Mammary epithelial cell (primary cell): ENCODE measurements at regions of chr5 and their contacts with region 1.

Region 1: GRCh38 chr5:174735498-174736330 is 11.3 kb downstream of the MSX2 start:
- DNase-seq: no peak
- H3K4me3 ChIP-seq: peak overlapping the region; percentile 31 to 42 (median 36)
- H3K27ac ChIP-seq: no peak overlapping the region
- H3K4me1 ChIP-seq: peaks cover 8% of the 10 kb centered on the region
- H3K27me3 ChIP-seq: peaks cover 7% of the 10 kb centered on the region
- CTCF ChIP-seq: peak; percentile 70 to 82

Region 2: DNA sequence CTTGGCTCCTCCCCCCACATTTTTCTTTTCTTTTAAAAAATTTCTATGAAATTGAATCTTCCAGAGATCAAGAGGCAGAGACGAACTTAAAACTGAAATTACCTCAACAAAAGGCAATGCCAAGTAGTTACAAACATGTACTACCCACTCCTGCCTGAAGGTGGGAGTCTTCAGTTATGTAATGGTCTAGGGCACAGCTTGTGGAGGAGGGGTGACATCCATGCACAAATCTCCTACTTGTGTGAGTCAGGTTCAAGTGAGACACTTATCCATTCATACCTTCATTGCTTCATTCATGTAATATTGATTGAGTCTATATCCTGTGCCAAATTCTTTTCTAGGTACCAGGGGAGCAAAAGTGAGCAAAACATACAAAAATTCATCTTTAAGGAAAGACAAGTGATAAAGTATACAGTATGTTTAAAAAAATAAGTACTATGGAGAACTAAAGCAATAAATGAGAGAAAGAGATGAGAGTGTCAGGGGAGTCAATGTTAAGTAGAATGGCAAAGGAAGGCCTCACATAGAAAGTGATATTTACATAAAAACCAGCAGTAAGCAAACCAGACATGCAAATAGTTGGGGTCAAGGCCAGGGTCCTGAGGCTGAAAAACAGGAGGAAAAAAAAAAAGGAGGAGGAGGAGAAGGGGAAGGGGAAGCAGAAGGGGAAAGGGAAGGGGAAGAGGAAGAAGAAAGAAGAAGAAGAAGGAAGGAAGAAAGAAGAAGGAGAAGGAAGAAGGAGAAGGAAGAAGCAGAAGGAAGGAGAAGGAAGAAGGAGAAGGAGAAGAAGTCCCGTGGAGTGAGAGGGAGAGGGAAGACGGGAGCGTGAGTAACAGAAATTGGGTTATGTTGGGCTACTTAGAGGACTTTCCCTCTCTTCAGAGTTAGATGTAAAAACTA is 715.1 kb before region 1 on chr5:
- CTCF ChIA-PET with region 1: no interaction called
- dilution Hi-C with region 1: no loop called
- in situ Hi-C with region 1: no loop called
- intact Hi-C with region 1: loop called (anchors 10 kb)
- DNase-seq: peak; percentile 59
- H3K4me3 ChIP-seq: no peak overlapping the region
- H3K27ac ChIP-seq: no peak overlapping the region
- H3K4me1 ChIP-seq: no peaks in the 10 kb centered on the region
- H3K27me3 ChIP-seq: no peaks in the 10 kb centered on the region
- CTCF ChIP-seq: peak in 1 of 2 donors; percentile 57

Region 3: DNA sequence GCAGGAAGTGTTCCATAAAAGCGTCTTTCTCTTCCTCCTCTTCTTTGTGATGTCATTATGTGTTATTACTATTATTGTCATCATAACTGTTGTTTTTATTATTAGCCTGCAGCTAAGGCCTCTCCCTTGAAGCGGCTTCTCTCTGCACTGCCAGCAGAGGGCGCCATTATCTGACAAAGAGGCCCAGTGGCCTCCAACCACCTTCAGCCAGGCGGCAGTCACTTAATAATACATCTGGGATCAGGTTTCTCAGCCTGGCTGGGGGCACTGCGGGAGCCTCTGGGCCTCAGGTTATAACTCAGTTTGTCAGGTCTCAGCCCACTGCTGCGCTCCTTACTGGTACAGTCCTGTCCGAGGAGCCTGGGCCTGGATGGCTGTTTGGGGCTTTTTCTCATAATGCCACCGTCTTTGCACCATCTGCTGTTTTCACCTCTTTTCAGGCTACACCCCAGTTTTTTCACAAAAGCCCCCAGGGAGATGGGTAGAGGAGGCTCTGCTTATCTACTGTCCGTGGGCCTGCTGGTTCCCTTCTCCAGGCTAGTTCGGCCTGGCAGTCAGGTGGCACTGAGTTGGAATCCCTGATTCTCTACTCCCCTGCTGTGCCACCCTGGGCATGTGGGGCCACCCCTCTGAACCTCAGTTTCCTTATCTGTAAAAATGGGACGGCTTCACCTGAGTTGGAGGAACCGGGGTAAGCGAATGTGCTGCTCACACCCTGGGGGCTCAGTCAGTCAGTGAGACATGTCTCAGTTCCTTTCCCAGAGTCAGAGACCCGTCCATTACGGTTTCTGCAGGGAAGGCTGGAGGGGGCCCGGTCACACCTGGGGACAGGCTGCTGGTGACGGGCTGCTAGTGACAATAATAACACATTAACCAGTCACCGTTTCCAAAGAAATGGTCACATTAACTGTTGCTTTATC is 408.1 kb before region 1 on chr5:
- CTCF ChIA-PET with region 1: no interaction called
- dilution Hi-C with region 1: no loop called
- in situ Hi-C with region 1: no loop called
- intact Hi-C with region 1: loop called (anchors 1 kb)
- DNase-seq: peak; percentile 56
- H3K4me3 ChIP-seq: no peak overlapping the region
- H3K27ac ChIP-seq: no peak overlapping the region
- H3K4me1 ChIP-seq: no peaks in the 10 kb centered on the region
- H3K27me3 ChIP-seq: no peaks in the 10 kb centered on the region
- CTCF ChIP-seq: peak; percentile 85 to 90

Region 4: DNA sequence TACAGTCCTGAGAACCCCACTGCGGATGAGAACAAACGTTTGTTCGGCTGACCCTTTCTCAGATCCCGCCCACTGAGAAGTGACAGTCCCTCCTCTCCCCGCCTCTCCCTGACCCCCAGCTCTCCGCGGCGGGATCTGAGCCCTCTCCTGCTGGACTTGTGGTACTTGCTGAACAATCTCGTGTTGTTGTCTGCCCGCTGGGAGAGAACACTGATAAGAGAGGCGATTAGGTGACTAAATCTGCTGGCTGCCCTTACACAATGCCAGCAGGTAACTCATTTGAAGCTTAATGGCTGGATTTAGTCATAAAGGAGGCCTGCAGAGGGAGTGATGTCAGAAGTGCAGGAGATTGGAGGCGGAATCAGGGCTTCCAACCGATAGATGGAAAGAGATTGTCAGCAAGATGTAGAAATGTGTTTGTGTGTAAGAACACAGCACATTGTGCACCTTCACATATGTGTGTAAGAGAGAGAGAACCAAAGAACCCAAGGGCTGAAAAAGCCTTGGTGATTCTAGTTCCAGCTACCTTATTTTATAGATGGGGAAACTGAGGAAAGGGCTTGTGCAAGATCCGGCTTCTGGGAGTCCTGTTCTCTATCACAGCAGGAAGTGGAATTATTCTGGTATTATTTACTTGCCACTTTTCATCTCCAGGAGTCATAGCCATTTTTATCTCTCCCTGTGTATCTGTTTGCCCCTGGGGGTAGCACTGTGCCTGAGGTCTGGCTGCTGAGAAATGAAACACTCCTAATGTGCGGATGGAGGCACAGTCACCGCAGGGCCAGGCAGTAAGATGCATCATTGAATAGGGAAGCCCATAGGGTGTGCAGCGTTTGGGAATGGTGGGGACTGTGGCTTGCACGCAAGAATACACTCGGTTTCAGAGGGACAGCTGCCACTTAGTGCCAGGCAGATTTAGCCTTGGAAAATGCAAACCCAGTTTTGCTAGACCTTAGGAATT is 215.0 kb before region 1 on chr5:
- CTCF ChIA-PET with region 1: no interaction called
- dilution Hi-C with region 1: no loop called
- in situ Hi-C with region 1: no loop called
- intact Hi-C with region 1: loop called (anchors 5 kb)
- DNase-seq: no peak
- H3K4me3 ChIP-seq: no peak overlapping the region
- H3K27ac ChIP-seq: no peak overlapping the region
- H3K4me1 ChIP-seq: no peaks in the 10 kb centered on the region
- H3K27me3 ChIP-seq: no peaks in the 10 kb centered on the region
- CTCF ChIP-seq: no peak

Region 5: DNA sequence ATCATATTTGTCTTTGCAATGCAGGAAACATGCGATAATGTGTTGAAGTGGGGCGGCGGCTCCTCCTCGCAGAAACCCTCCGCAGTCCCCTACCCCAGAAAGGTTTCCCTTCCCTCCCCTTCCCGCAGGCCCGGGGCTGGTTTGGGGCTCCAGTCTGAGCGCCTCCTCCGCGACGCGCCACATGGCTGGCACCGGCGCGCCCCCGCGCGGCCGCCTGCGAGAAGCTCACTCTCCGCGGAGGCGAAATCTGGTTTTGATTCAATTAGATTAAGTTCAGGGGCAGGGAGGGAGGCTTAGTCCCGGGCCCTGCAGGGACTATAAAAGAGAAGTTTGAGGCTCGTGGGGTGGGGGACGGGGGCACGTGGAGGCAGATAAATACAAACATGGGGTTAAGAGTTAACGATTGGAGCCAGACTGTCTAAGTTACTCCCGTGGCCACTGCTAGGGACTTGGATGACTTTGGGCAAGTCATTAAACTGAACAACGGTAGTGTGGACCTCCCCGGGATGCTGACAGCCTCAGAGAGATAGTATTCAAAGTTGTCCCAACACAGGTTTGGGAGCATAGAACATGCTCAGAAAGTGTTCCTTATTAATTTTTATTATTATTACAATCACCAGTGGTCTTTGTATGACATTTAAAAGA is 58.1 kb after region 1 on chr5:
- CTCF ChIA-PET with region 1: interaction called, 3 read pairs
- dilution Hi-C with region 1: no loop called
- in situ Hi-C with region 1: no loop called
- intact Hi-C with region 1: loop called (anchors 1 kb)
- DNase-seq: peak; percentile 36
- H3K4me3 ChIP-seq: no peak overlapping the region
- H3K27ac ChIP-seq: no peak overlapping the region
- H3K4me1 ChIP-seq: no peaks in the 10 kb centered on the region
- H3K27me3 ChIP-seq: no peaks in the 10 kb centered on the region
- CTCF ChIP-seq: peak; percentile 68 to 95